BJ (cell line): ENCODE measurements at regions of chr13 and their contacts with region 1.

Region 1: GRCh38 chr13:59771272-59771671 is 392.5 kb downstream of the DIAPH3 start:
- DNase-seq: no peak
- H3K4me3 ChIP-seq: no peak overlapping the region
- H3K27me3 ChIP-seq: no peaks in the 10 kb centered on the region
- CTCF ChIP-seq: peak; percentile 76

Region 2: GRCh38 chr13:59391696-59392095 is 379.6 kb before region 1 on chr13:
- CTCF ChIA-PET with region 1: interaction called, 17 read pairs
- POLR2A ChIA-PET with region 1: no interaction called
- DNase-seq: no peak
- H3K4me3 ChIP-seq: no peak overlapping the region
- H3K27me3 ChIP-seq: no peaks in the 10 kb centered on the region
- CTCF ChIP-seq: peak; percentile 93

Region 3: DNA sequence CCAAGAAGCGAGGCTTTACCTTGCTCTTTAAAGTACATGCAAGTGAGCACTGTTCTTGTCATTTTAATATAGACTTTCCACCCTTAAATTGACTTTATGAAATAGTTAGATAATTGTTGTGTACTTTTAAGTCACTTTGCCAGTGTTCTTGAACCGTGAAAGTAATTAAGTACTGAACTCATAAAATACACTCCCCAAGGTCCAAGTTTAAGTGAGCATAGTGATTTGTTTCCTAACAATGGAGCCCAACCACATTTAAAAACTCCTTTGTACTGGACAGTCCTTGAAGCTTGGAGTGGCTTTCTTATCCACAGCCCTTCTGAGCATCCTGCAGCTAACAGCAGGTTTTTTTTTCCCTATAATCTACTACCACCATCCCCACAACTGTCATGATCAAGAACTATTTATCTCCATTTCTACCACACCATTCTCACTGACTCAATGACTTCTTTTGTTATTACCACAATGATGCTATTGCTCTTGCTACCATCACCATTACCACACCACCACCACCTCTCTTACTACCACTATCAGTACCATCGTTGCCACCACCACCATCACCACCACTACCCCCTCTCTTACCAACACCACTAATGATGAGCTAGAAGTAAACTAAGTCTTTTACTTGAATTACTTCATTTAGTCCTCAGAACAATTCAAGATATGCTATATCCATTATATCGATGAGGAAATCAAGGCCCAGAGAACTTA is 60.1 kb before region 1 on chr13:
- CTCF ChIA-PET with region 1: no interaction called
- POLR2A ChIA-PET with region 1: no interaction called
- DNase-seq: no peak
- H3K4me3 ChIP-seq: no peak overlapping the region
- H3K27me3 ChIP-seq: no peaks in the 10 kb centered on the region
- CTCF ChIP-seq: no peak

Region 4: GRCh38 chr13:59906413-59907049 is 135.3 kb after region 1 on chr13:
- CTCF ChIA-PET with region 1: interaction called, 10 read pairs
- POLR2A ChIA-PET with region 1: no interaction called
- DNase-seq: no peak
- H3K4me3 ChIP-seq: no peak overlapping the region
- H3K27me3 ChIP-seq: no peaks in the 10 kb centered on the region
- CTCF ChIP-seq: peak; percentile 76